Dorsolateral prefrontal cortex (tissue), 120 donors: ENCODE measurements at regions of chr6 and their contacts with region 1.

Region 1: DNA sequence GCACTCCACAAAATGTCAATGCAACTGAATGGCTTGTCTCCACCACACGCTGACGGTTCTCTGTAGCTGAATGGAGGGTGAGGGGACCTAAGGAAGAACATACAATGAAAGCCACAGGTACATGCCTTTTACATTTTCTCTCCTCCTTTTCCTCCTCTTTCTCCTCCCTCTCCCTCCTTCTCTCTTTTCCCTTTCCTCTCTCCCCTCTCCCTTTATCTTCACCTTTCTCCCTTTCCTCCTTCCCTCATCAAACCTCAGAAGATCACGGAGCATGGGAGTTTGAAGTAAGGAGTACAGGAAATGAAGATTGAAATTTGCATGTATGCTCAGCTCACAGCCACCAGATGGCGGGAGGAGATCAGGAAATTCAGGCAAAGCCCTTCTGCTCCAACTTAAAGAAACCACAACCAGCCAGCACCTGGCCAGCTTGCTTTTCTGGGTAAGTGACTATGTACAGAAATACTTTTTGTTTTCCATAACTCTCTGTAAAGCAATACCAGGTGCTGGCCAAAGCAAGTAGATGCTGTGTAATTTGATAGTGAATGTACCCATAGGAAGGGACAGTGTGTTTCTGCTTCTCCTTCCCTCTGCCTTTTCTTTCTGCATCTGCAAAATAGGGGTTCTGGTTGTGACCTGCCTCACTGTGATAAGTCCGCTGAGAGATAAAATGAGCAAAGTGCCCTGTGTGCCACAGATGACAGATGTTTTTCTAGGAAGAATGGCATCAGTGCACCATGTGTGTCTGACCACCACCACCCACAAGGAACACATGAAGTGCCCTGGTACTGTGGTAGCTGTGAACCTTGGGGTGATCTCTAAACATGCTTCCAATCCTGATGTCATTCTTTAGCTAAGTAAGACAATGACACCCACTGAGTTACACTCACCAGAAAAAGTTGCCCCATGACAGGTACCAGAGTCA is 18.6 kb upstream of the FOXO3 start:
- DNase-seq: peak; percentile 33 to 76 (median 70)
- H3K4me3 ChIP-seq: peak overlapping the region in 6 of 59 donors; percentile 18 to 37 (median 32)
- H3K27ac ChIP-seq: no peak overlapping the region
- H3K27me3 ChIP-seq: no peaks in the 10 kb centered on the region
- CTCF ChIP-seq: peak; percentile 68 to 99 (median 91)

Region 2: GRCh38 chr6:108782179-108783041 is 240.3 kb after region 1 on chr6:
- intact Hi-C with region 1: loop called in 1 of 2 experiments (anchors 5 kb)
- DNase-seq: peak; percentile 73 to 84 (median 80)
- H3K4me3 ChIP-seq: peak overlapping the region; percentile 28 to 79 (median 60)
- H3K27ac ChIP-seq: peak overlapping the region in 28 of 59 donors; percentile 4 to 79 (median 52)
- H3K27me3 ChIP-seq: no peaks in the 10 kb centered on the region
- CTCF ChIP-seq: peak; percentile 41 to 93 (median 80)

Region 3: DNA sequence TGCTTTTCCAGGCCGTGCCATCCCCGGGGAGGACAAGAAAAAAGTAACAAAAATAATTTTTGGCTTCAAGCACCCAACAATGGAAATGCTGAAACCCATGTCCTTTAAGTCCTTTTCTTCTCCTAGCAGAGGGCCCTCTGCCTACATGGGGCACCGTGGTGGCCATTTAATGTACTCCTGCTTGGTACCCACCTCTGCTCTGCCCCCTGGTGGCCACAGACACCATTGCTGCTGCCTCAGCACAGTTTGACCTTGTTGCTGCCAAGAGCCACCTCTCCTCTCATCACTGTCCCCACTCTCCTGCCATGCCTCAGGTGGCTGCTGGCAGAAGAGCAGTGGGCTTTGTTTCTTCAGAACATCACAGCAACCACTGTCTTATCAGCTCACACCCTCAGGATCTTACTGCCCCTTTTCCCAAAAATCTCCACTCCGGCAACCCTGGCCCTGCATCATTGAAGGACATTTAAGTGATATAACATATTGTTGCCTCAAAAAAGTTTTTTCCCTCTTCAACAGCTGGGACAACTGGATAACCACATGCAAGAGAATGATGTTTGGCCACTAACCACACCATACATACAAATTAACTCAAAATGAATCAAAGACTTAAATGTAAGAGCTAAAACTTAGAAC is 293.2 kb after region 1 on chr6:
- intact Hi-C with region 1: loop called (anchors 5 kb)
- DNase-seq: peak; percentile 86 to 93 (median 90)
- H3K4me3 ChIP-seq: peak overlapping the region in 7 of 59 donors; percentile 2 to 31 (median 9)
- H3K27ac ChIP-seq: peak overlapping the region in 28 of 59 donors; percentile 3 to 70 (median 41)
- H3K27me3 ChIP-seq: no peaks in the 10 kb centered on the region
- CTCF ChIP-seq: peak; percentile 89 to 99 (median 96)

Region 4: DNA sequence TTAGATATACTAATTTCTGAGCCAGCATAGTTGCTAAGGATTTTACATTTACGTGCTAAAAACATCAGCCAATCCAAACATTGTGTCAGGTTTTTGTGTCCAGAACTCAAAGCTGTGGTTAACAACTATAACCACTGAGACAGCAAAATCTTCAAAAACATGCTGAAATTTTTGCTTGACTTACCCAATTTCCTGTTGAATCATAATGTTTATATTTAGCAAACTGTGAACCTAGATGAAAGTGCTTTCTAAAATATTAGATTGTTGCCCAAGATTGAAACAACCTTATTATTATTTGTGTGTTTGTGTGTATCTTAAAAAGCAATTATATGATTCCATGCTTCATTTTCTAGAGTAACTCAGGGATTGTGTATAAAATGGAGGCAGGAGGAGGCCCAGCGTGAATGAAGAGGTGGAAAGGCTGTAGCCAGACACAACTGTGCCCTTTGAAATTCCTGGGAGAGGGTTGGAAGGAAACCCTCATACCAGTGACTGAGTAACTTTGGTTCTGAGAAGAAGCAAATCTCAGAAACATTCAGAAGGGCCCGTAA is 354.1 kb after region 1 on chr6:
- intact Hi-C with region 1: loop called (anchors 1 to 5 kb)
- DNase-seq: no peak
- H3K4me3 ChIP-seq: no peak overlapping the region
- H3K27ac ChIP-seq: peak overlapping the region in 18 of 59 donors; percentile 3 to 73 (median 46)
- H3K27me3 ChIP-seq: no peaks in the 10 kb centered on the region
- CTCF ChIP-seq: no peak

Region 5: DNA sequence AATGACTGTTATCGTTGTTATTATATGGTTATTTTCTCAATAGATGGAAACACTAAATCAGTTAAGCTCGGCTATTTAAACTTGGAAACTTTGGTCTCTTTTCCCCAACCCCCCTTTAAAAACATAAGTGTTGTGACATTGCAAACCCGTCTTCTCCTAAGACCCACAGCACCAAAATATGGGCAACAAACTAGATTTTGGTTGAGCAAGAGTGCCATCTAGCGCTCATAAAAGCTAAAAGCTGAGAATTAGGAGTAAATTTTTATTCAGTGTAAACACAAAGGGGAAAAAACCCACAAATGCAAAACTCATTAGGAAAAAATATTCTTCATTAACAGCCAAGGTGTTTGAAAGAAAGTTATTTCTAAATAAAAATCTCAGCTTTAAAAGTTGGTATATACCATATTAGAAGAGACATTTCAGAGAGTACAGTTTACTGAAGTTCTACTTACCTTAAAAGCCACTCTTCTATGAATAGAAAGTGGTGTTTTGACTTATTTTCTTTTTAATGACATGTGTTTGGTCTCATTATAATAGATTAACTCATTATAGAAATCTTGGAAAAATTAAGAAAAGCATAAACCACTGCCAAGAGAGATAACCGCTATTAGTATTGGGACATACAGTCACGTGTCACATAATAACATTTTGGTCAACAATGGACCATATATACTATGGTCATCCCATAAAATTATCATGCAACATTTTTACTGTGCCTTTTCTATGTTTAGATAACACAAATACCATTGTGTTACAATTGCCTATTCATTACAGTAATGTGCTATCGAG is 531.4 kb after region 1 on chr6:
- intact Hi-C with region 1: loop called (anchors 2 to 5 kb)
- DNase-seq: peak in 2 of 10 donors; percentile 45 to 48
- H3K4me3 ChIP-seq: peak overlapping the region in 8 of 59 donors; percentile 3 to 30 (median 6)
- H3K27ac ChIP-seq: peak overlapping the region in 1 of 59 donors; percentile 39
- H3K27me3 ChIP-seq: no peaks in the 10 kb centered on the region
- CTCF ChIP-seq: peak; percentile 60 to 91 (median 75)

Region 6: DNA sequence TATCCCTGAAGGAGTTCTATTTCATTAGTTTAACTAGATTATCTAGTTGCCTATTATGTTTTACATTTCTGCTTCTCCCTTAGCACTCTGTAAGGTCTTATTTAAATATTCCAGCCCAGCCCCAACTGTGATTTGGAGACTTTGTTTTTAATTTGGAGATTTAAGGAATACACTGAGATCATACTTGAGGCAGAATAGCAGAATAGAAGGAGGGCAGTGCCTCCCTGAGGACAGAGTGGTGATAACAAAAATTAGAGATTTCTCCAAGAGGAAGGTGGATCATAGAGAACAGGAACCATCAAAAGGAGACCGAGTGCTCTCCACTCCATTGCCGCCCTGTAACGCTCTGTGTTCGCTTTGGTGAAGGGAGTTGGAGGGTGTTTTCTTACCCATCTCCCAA is 854.9 kb after region 1 on chr6:
- intact Hi-C with region 1: loop called in 1 of 2 experiments (anchors 10 kb)
- DNase-seq: no peak
- H3K4me3 ChIP-seq: no peak overlapping the region
- H3K27ac ChIP-seq: no peak overlapping the region
- H3K27me3 ChIP-seq: no peaks in the 10 kb centered on the region
- CTCF ChIP-seq: peak in 49 of 56 donors; percentile 12 to 68 (median 43)